ENCODE measurements at regions of chr16 and their contacts with region 1.

Region 1: GRCh38 chr16:8655184-8655717 is 19.2 kb upstream of the ABAT start:
- DNase-seq: no peak
- H3K4me3 ChIP-seq: no peak overlapping the region
- H3K27ac ChIP-seq: no peak overlapping the region
- H3K4me1 ChIP-seq: no peaks in the 10 kb centered on the region
- H3K27me3 ChIP-seq: no peaks in the 10 kb centered on the region
- CTCF ChIP-seq: peak in 2 of 3 experiments; percentile 19 to 36

Region 2: DNA sequence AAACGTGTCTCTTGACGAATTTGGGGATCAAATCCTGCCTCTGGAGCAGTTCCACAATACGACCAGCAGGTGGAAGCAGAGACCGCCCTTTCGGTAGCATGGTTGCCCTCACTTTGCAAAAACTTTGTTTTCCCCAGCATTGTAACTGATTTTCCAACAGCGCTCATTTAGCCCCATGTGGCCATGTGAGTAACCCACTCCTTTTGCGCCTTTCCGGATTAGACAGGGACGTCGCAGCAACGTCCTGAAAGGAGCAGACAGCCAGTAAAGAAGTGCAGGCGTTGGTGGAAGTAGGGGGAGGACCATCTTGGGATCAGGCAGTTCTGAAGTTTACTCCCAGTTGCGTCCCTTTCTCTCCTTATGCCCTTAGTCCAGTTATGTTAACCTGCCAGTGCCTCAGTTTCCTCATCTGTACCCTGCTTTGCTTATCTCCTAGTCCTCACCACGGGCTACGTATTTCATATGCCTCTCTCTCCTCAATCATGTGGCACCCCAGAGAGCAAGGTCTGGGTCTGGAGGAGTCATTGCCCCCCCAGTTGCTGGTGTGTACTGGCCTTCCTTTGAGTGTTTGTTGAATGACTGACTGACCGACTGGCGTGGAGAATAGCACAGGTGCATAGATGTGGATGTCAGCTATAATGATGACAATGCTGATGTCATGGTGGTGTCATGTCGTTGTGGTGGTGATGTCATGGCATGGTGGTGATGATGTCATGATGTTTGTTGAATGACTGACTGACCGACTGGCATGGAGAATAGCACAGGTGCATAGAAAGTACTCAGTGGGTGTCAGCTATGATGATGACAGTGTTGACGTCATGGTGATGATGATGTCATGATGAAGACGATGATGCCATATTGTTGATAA is 87.3 kb before region 1 on chr16:
- intact Hi-C with region 1: loop called (anchors 1 kb)
- DNase-seq: peak; percentile 37 to 86
- H3K4me3 ChIP-seq: no peak overlapping the region
- H3K27ac ChIP-seq: no peak overlapping the region
- H3K4me1 ChIP-seq: peaks cover 0 to 11% of the 10 kb centered on the region in 2 donors
- H3K27me3 ChIP-seq: no peaks in the 10 kb centered on the region
- CTCF ChIP-seq: peak; percentile 94 to 99 (median 97)

Region 3: GRCh38 chr16:8963825-8964441 is 308.7 kb after region 1 on chr16 and contains the start of gene USP7:
- intact Hi-C with region 1: no loop called
- DNase-seq: peak; percentile 51 to 95
- H3K4me3 ChIP-seq: peak within 1 kb of the TSS; percentile 75 to 84
- H3K27ac ChIP-seq: peak within 1 kb of the TSS; percentile 75 to 78
- H3K4me1 ChIP-seq: peaks cover 15 to 31% of the 10 kb centered on the region in 2 donors
- H3K27me3 ChIP-seq: no peaks in the 10 kb centered on the region
- CTCF ChIP-seq: no peak
- total RNA-seq, gene USP7: 55.3 TPM

Region 4: DNA sequence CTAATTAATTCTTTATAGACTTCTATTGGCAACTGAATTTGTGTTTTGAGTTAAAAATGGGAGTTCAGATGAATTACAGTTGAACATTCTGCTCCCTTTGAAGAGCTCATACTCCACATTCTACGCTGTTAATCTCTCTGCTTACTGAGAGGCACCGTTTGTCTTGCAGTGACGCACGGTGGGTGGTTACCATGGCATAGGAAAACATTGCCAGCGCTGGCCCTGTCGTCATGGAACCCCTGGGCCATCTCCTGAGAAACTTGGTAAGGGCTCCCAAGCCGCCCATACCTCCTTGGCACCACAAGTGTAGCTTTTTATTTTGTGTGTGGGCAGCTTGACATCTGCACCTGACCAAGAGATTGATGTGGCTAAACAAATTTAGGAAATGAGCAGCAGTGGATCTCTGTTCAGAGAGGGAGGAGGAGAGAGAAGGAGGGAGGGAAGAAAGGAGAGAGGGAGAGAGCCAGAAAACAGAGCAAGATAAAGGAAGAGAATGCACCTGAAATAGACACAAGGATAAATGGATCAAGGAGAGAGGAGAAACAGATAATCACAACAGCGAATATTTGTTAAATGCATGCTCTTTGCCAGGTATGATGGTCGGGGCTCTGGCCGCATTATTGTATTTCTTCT is 834.7 kb after region 1 on chr16:
- intact Hi-C with region 1: no loop called
- DNase-seq: no peak
- H3K4me3 ChIP-seq: no peak overlapping the region
- H3K27ac ChIP-seq: no peak overlapping the region
- H3K4me1 ChIP-seq: no peaks in the 10 kb centered on the region
- H3K27me3 ChIP-seq: no peaks in the 10 kb centered on the region
- CTCF ChIP-seq: no peak